Ovary (tissue), 10 donors: ENCODE measurements at regions of chr13 and their contacts with region 1.

Region 1: DNA sequence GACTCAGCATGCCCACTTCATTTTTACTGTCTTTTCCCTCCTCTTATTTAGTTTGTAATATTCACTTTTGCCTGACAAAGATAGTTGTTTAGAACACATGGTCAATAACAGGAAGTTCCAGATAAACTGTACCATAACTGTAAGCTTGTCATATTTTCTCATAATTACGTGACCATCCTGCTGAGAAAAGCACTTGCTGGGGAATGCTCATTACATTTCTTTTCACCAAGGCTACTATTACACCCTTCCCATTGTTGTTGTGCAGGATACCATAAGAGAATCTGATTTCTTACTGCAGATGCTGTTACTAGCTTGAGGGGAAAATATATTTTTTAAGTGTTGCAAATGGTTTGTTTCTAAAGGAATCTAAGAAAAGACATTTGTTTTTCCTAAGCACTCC is 111.7 kb upstream of the SLITRK6 start:
- DNase-seq: no peak
- H3K4me3 ChIP-seq: no peak overlapping the region
- H3K27ac ChIP-seq: no peak overlapping the region
- H3K4me1 ChIP-seq: no peaks in the 10 kb centered on the region
- H3K27me3 ChIP-seq: no peaks in the 10 kb centered on the region
- CTCF ChIP-seq: no peak
- EP300 ChIP-seq: no peak
- POLR2A ChIP-seq: no peak

Region 2: DNA sequence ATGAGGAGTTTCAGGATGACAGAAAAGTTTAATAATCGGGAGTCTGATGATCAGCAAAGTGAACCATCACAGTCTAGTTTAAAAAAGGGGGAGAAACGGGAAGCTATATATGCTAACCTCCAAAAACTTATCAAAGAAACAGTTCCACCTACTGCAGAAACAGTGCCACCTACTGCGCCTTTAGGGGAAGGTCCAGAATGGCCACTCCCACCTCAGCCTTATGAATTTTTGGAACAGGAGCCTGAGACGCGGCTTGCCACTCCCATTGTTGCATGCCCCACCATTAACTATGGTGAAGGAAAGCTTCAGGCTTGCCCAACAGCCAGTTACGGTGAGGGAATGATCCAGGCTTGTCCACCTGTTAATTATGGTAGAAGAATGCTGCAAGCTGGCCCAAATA is 1040.8 kb before region 1 on chr13:
- intact Hi-C with region 1: loop called in 1 of 4 experiments (anchors 5 kb)
- DNase-seq: no peak
- H3K4me3 ChIP-seq: no peak overlapping the region
- H3K27ac ChIP-seq: no peak overlapping the region
- H3K4me1 ChIP-seq: no peaks in the 10 kb centered on the region
- H3K27me3 ChIP-seq: no peaks in the 10 kb centered on the region
- CTCF ChIP-seq: no peak
- EP300 ChIP-seq: no peak
- POLR2A ChIP-seq: no peak

Region 3: GRCh38 chr13:85543144-85543543 is 367.8 kb before region 1 on chr13:
- intact Hi-C with region 1: no loop called
- DNase-seq: no peak
- H3K4me3 ChIP-seq: no peak overlapping the region
- H3K27ac ChIP-seq: no peak overlapping the region
- H3K4me1 ChIP-seq: no peaks in the 10 kb centered on the region
- H3K27me3 ChIP-seq: no peaks in the 10 kb centered on the region
- CTCF ChIP-seq: no peak
- EP300 ChIP-seq: no peak
- POLR2A ChIP-seq: no peak

Region 4: DNA sequence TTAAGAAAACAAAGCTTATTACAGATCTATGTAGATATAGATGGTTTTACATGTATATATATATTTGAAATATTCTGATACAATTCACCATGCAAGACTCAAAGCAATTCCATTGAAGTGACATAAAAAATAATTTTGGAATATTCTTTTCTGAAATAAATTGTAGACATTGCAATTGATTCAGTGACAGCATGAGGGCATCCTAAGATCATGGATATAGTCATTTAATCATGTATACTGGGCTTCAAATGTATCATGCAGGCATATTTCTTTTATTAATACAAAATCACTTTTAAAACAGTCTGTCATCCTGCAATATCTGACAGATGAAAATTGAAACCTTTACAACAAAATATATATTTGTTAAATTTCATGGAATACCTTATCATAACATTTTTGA is 174.9 kb after region 1 on chr13:
- intact Hi-C with region 1: no loop called
- DNase-seq: no peak
- H3K4me3 ChIP-seq: no peak overlapping the region
- H3K27ac ChIP-seq: no peak overlapping the region
- H3K4me1 ChIP-seq: no peaks in the 10 kb centered on the region
- H3K27me3 ChIP-seq: no peaks in the 10 kb centered on the region
- CTCF ChIP-seq: no peak
- EP300 ChIP-seq: no peak
- POLR2A ChIP-seq: no peak